ENCODE measurements at regions of chr7 and their contacts with region 1.

Region 1: GRCh38 chr7:144011458-144012230 is 11.5 kb downstream of the OR6B1 start:
- DNase-seq: peak; percentile 51
- ATAC-seq: peak; percentile 90
- H3K4me3 ChIP-seq: no peak overlapping the region
- H3K27ac ChIP-seq: no peak overlapping the region
- H3K4me1 ChIP-seq: no peaks in the 10 kb centered on the region
- H3K27me3 ChIP-seq: no peaks in the 10 kb centered on the region
- CTCF ChIP-seq: peak; percentile 68
- POLR2A ChIP-seq: no peak
- RAD21 ChIP-seq: peak; percentile 73

Region 2: DNA sequence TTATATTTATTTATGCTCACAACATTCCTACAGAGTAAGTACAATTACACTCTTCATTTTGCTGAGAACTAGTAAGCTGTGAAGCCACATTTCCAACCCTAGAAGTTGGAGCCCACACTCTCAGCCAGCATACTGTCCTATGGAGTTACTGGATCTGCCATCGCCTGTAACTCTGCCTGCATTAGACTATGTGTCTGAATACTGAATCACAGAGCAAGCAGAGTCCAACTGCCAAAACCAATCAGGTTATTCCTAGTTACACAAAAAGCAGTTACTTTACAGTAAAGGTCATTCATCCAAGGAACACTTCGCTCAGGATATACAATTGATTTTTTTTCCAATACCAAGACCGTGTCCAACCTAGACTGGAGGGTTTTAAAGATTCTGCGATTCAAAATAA is 275.7 kb before region 1 on chr7:
- CTCF ChIA-PET with region 1: interaction called, 11 read pairs
- POLR2A ChIA-PET with region 1: no interaction called
- dilution Hi-C with region 1: no loop called
- in situ Hi-C with region 1: no loop called
- intact Hi-C with region 1: no loop called
- DNase-seq: no peak
- ATAC-seq: no peak
- H3K4me3 ChIP-seq: no peak overlapping the region
- H3K27ac ChIP-seq: no peak overlapping the region
- H3K4me1 ChIP-seq: no peaks in the 10 kb centered on the region
- H3K27me3 ChIP-seq: no peaks in the 10 kb centered on the region
- CTCF ChIP-seq: no peak
- POLR2A ChIP-seq: no peak
- RAD21 ChIP-seq: no peak